Activated T-helper 1 cell treated with anti-CD3 and anti-CD28 coated beads, Interleukin-12 subunit alpha, Interleukin-12 subunit beta, Interleukin-2, Interleukin-4 antibody, amounts not matched to agents 30 ng/mL and 10 ng/mL and 1 ng/mL, durations not matched to agents 14 hours and 24 hours and 36 hours (primary cell): ENCODE measurements at regions of chr1 and their contacts with region 1.

Region 1: GRCh38 chr1:198157241-198157846 is 546 bp downstream of the NEK7 start:
- DNase-seq: peak; percentile 76
- H3K4me3 Mint-ChIP-seq: peak overlapping the region; percentile 97
- H3K27ac Mint-ChIP-seq: peak overlapping the region; percentile 96
- H3K4me1 Mint-ChIP-seq: peaks cover 47% of the 10 kb centered on the region
- H3K27me3 Mint-ChIP-seq: no peaks in the 10 kb centered on the region

Region 2: GRCh38 chr1:197902454-197903195 is 254.7 kb before region 1 on chr1 and contains the start of gene C1orf53:
- intact Hi-C with region 1: loop called (anchors 10 kb)
- DNase-seq: peak; percentile 78
- H3K4me3 Mint-ChIP-seq: peak within 1 kb of the TSS; percentile 91
- H3K27ac Mint-ChIP-seq: peak within 1 kb of the TSS; percentile 93
- H3K4me1 Mint-ChIP-seq: peaks cover 17% of the 10 kb centered on the region
- H3K27me3 Mint-ChIP-seq: peaks cover 55% of the 10 kb centered on the region
- total RNA-seq, gene C1orf53: 0.81 and 1.3 TPM in 2 replicates

Region 3: GRCh38 chr1:198167436-198167934 is 10.1 kb after region 1 on chr1:
- intact Hi-C with region 1: loop called (anchors 1 kb)
- DNase-seq: peak; percentile 20
- H3K4me3 Mint-ChIP-seq: peak overlapping the region; percentile 56
- H3K27ac Mint-ChIP-seq: peak overlapping the region; percentile 91
- H3K4me1 Mint-ChIP-seq: peaks cover 78% of the 10 kb centered on the region
- H3K27me3 Mint-ChIP-seq: no peaks in the 10 kb centered on the region

Region 4: GRCh38 chr1:198234520-198235251 is 77.3 kb after region 1 on chr1:
- intact Hi-C with region 1: loop called (anchors 2 kb)
- DNase-seq: no peak
- H3K4me3 Mint-ChIP-seq: no peak overlapping the region
- H3K27ac Mint-ChIP-seq: no peak overlapping the region
- H3K4me1 Mint-ChIP-seq: peaks cover 26% of the 10 kb centered on the region
- H3K27me3 Mint-ChIP-seq: no peaks in the 10 kb centered on the region

Region 5: DNA sequence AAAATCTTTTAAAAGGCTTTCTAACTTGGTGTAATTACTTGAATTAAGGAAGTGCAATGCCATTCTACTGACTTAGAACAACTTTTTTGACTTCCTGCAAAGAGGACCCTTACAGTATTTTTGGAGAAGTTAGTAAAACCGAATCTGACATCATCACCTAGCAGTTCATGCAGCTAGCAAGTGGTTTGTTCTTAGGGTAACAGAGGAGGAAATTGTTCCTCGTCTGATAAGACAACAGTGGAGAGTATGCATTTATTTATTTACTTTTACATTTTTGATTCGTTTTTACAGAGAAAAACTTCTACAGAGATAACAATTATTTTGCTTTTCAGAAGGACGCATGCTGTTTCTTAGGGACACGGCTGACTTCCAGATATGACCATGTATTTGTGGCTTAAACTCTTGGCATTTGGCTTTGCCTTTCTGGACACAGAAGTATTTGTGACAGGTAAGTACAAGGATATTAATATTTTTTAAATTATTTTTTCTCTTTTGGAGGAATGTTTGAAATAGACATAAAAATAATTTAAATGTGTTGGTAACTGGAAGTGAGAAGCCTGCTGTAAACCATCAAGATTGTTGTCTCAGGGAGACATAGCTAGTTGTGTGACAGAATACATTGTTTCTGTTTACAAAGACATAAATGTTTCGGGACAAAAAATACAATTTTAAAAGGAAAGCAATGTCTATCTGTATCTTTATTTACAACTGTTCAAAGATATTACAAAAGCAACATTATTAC is 481.7 kb after region 1 on chr1 and contains the start of gene PTPRC:
- intact Hi-C with region 1: loop called (anchors 5 kb)
- DNase-seq: no peak
- H3K4me3 Mint-ChIP-seq: peak within 1 kb of the TSS; percentile 92
- H3K27ac Mint-ChIP-seq: peak within 1 kb of the TSS; percentile 96
- H3K4me1 Mint-ChIP-seq: peaks cover 54% of the 10 kb centered on the region
- H3K27me3 Mint-ChIP-seq: no peaks in the 10 kb centered on the region
- total RNA-seq, gene PTPRC: 512 and 516 TPM in 2 replicates

Region 6: GRCh38 chr1:198937231-198938031 is 780.1 kb after region 1 on chr1:
- intact Hi-C with region 1: loop called (anchors 5 kb)
- DNase-seq: peak; percentile 71
- H3K4me3 Mint-ChIP-seq: no peak overlapping the region
- H3K27ac Mint-ChIP-seq: peak overlapping the region; percentile 93
- H3K4me1 Mint-ChIP-seq: peaks cover 33% of the 10 kb centered on the region
- H3K27me3 Mint-ChIP-seq: no peaks in the 10 kb centered on the region